ENCODE measurements at regions of chr16 and their contacts with region 1.

Region 1: GRCh38 chr16:30984669-30985400 is at the start of gene HSD3B7:
- DNase-seq: peak; percentile 85
- H3K4me3 Mint-ChIP-seq: peak within 1 kb of the TSS; percentile 39
- H3K27ac Mint-ChIP-seq: no peak within 1 kb of the TSS
- H3K4me1 Mint-ChIP-seq: peaks cover 14% of the 10 kb centered on the region
- H3K27me3 Mint-ChIP-seq: no peaks in the 10 kb centered on the region
- total RNA-seq, gene HSD3B7: 7.1 to 7.5 TPM

Region 2: DNA sequence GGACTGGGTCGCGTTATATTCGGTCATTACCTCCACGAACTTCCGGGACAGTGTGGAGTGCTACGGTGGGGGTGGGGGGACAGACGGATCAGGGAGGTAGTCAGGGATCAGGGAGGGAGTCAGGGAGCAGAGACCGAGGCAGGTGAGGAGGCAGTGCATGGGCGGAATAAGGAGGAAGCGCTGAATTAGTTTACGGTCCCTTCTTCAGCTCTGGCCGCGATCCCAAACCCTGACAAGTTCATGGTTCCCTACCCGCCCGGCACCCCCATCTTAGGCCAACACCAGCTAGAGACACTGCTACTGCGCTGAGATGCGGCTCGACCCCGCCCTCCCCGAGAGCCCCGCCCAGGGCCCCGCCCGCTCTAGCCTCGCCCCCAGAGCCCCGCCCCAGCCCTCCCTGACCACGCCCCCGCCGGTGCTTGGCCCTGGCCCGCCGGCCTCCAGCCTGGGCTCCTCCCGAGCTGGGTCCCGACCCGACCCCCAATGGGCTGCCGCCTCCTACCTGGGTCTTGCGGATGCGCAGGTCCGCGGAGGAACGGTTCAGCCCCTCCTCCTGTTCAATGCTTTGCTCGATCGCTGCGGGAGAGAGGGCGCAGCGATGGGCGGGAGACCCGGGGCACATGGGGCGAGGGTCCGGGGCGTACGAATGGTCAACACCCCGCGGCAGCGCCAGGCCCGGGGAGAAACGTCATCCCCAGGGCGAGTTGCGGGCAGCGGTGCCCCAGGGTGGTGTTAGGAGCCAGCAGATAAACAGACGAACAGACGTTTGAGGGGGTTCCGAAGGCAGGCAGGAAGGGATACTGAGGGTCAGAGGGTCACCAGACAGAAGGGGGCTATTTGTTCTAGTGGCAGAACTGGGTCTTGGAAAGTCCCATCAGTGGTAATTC is 12.4 kb after region 1 on chr16:
- CTCF ChIA-PET with region 1: interaction called, 18 read pairs
- POLR2A ChIA-PET with region 1: interaction called, 7 read pairs
- DNase-seq: peak; percentile 88
- H3K4me3 Mint-ChIP-seq: peak overlapping the region; percentile 84
- H3K27ac Mint-ChIP-seq: peak overlapping the region; percentile 78
- H3K4me1 Mint-ChIP-seq: peaks cover 36% of the 10 kb centered on the region
- H3K27me3 Mint-ChIP-seq: peaks cover 12% of the 10 kb centered on the region

Region 3: DNA sequence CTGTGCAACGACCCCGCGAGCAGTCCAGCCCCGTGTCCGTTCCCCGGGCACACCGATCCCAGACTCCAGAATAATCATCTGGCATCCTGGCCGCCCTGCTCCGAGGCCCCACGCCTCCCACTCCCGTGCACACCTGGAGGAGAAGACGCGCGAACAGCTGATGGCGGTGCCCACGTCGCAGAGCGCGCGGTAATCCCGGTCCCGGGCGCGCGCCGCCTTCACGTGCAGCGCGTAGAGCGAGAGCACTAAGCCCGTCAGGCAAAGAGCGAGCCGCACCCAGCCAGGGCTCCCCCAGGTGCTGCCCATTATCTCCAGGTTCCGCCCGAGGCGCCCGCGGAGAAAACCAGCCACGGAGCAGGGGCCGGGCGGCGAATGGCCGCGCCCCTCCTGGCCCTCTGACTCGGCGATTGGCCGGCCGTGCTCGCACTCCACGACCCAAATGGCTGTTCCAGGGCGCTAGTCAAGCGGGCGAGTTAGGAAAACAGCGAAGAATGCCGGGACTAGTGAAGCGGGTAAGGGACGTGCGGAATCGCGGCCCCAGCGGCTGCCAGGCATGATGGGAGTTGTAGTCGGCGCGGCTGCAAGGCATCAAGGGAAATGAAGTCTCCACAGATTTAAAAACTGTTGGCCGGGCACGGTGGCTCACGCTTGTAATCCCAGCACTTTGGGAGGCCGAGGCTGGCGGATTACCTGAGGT is 109.7 kb after region 1 on chr16 and contains the start of gene VKORC1:
- CTCF ChIA-PET with region 1: interaction called, 24 read pairs
- POLR2A ChIA-PET with region 1: interaction called, 6 read pairs
- DNase-seq: peak; percentile 90
- H3K4me3 Mint-ChIP-seq: peak within 1 kb of the TSS; percentile 92
- H3K27ac Mint-ChIP-seq: peak within 1 kb of the TSS; percentile 85
- H3K4me1 Mint-ChIP-seq: peaks cover 33% of the 10 kb centered on the region
- H3K27me3 Mint-ChIP-seq: no peaks in the 10 kb centered on the region
- total RNA-seq, gene VKORC1: 66.0 to 66.1 TPM